Mammary epithelial cell (primary cell): ENCODE measurements at regions of chr1 and their contacts with region 1.

Region 1: GRCh38 chr1:114346480-114347029 is 164.4 kb downstream of the TRIM33 start:
- DNase-seq: peak; percentile 92
- H3K4me3 ChIP-seq: peak overlapping the region; percentile 48 to 51 (median 49)
- H3K27ac ChIP-seq: peak overlapping the region; percentile 33
- H3K4me1 ChIP-seq: peaks cover 6% of the 10 kb centered on the region
- H3K27me3 ChIP-seq: no peaks in the 10 kb centered on the region
- CTCF ChIP-seq: peak; percentile 100

Region 2: DNA sequence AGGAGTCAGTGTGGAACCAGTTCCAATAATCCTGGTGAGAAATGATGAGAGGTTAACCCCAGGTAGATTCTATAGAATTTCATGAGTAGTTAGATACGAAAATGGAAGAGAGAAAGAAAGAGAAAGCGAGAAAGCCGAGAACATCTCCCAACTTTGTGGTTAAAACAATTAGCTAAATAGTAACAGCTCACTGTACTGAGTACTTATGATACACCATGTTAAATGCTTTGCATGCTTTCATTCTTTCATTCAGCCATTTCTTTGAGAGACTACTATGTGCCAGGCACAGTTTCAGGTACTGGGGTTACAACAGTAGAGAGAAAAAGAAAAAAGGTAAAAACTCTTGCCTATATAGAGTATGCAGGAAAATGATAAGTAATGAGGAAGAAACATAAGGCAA is 83.2 kb before region 1 on chr1:
- CTCF ChIA-PET with region 1: no interaction called
- dilution Hi-C with region 1: no loop called
- in situ Hi-C with region 1: no loop called
- intact Hi-C with region 1: no loop called
- DNase-seq: no peak
- H3K4me3 ChIP-seq: no peak overlapping the region
- H3K27ac ChIP-seq: no peak overlapping the region
- H3K4me1 ChIP-seq: no peaks in the 10 kb centered on the region
- H3K27me3 ChIP-seq: peaks cover 4% of the 10 kb centered on the region
- CTCF ChIP-seq: no peak

Region 3: DNA sequence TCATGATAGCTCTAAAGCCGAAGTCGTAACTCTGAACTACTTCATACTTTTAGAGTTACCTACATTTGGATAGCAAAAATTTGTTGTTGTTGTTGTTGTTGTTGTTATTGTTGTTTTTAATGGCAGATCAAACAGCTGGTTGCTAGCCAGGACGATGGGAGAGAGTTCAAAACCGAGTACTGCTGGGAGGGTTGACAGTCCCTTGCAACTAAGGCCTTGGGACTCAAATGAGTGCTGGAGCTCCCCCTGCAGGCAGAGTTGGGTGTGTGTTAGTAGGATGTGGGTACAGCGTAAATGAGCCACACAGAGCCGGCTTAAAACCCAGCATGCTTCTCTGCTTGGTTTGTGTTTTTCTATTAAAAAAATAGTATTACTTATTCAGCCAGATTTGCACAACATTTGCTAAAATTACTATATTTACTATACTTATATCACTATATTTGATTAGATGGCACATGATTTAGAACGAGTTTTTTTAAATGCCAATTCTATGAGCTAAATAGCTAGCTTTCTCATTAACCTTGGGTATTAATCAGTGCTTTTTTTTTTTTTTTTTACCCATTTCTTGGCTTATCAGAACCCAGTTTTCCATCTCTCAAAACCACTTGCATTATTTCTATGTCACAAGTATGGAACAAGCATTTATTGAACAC is 63.7 kb before region 1 on chr1:
- CTCF ChIA-PET with region 1: no interaction called
- dilution Hi-C with region 1: no loop called
- in situ Hi-C with region 1: no loop called
- intact Hi-C with region 1: loop called (anchors 1 kb)
- DNase-seq: peak; percentile 64
- H3K4me3 ChIP-seq: no peak overlapping the region
- H3K27ac ChIP-seq: no peak overlapping the region
- H3K4me1 ChIP-seq: no peaks in the 10 kb centered on the region
- H3K27me3 ChIP-seq: no peaks in the 10 kb centered on the region
- CTCF ChIP-seq: peak; percentile 85 to 93

Region 4: GRCh38 chr1:114497676-114498075 is 151.1 kb after region 1 on chr1:
- CTCF ChIA-PET with region 1: interaction called, 13 read pairs
- dilution Hi-C with region 1: no loop called
- in situ Hi-C with region 1: no loop called
- intact Hi-C with region 1: no loop called
- DNase-seq: no peak
- H3K4me3 ChIP-seq: no peak overlapping the region
- H3K27ac ChIP-seq: no peak overlapping the region
- H3K4me1 ChIP-seq: no peaks in the 10 kb centered on the region
- H3K27me3 ChIP-seq: no peaks in the 10 kb centered on the region
- CTCF ChIP-seq: no peak

Region 5: GRCh38 chr1:114558544-114558943 is 212.0 kb after region 1 on chr1:
- CTCF ChIA-PET with region 1: no interaction called
- dilution Hi-C with region 1: loop called (anchors 5 kb)
- in situ Hi-C with region 1: loop called (anchors 10 to 25 kb)
- intact Hi-C with region 1: loop called (anchors 1 kb)
- DNase-seq: peak; percentile 13
- H3K4me3 ChIP-seq: no peak overlapping the region
- H3K27ac ChIP-seq: no peak overlapping the region
- H3K4me1 ChIP-seq: no peaks in the 10 kb centered on the region
- H3K27me3 ChIP-seq: no peaks in the 10 kb centered on the region
- CTCF ChIP-seq: peak; percentile 39 to 50

Region 6: DNA sequence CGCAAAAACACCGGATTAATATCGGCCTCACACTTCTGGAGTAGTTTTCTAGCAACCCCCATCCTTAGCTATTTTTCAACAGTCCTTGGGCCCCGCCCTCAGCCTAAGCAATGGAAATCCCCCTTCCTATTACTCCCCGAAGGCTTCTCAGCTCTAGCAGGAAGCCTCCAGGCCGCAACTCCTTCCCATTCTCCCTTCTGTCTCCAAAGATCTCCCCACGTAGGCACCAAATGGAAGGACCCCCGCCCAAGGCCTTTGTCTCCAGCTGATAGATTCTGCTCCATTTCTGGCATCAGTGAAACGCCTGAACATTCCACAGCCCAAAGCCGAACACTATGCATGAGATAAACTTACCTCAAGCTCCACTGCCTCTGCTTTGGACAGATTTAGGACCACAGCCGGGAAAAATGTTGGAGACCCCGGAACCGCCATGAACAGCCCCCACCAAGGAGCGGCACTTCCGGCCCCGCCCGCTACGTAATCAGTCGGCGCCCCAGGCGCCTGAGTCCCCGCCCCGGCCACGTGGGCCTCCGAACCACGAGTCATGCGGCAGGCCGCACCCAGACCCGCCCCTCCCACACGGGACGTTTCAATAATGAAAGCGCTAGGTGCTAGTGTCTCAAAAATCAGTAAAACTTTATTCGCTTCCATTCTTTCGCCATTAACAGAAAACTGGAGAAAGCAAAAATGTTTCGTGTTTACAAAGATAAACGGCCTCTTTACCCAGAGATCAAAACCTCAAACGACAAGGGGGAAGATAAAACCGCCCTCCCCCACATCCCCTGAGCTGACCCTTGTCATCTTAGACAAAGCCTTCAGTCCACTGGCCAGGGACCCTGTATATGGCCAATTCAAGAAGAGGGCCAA is 370.0 kb after region 1 on chr1 and contains the start of gene NRAS:
- CTCF ChIA-PET with region 1: no interaction called
- dilution Hi-C with region 1: no loop called
- in situ Hi-C with region 1: no loop called
- intact Hi-C with region 1: loop called (anchors 1 kb)
- DNase-seq: peak; percentile 88
- H3K4me3 ChIP-seq: peak within 1 kb of the TSS; percentile 70 to 94 (median 73)
- H3K27ac ChIP-seq: peak within 1 kb of the TSS; percentile 99
- H3K4me1 ChIP-seq: peaks cover 7% of the 10 kb centered on the region
- H3K27me3 ChIP-seq: no peaks in the 10 kb centered on the region
- CTCF ChIP-seq: no peak
- total RNA-seq, gene NRAS: 44.9 to 67.3 TPM

Region 7: DNA sequence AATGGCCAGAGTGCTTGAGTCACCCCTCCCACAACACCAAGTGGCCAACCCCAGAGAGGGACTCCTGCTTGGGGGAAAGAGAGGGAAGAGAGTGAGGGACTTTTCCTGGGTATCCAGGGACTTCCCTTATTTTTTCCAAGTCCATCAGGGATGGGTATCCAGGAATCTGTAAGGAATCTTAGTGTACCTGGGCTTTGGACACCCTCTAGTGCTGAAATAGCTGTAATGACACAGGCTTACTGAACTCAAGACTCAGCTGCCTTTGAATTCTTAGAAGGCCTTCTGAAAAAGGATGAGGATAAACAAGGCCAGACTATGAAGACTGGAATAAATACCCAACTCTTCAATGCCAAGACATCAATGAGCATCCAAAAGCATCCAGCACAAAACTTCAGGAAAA is 695.1 kb after region 1 on chr1:
- CTCF ChIA-PET with region 1: no interaction called
- dilution Hi-C with region 1: no loop called
- in situ Hi-C with region 1: no loop called
- intact Hi-C with region 1: loop called (anchors 1 kb)
- DNase-seq: peak; percentile 33
- H3K4me3 ChIP-seq: no peak overlapping the region
- H3K27ac ChIP-seq: no peak overlapping the region
- H3K4me1 ChIP-seq: no peaks in the 10 kb centered on the region
- H3K27me3 ChIP-seq: no peaks in the 10 kb centered on the region
- CTCF ChIP-seq: peak; percentile 62 to 83